ENCODE measurements at regions of chr4 and their contacts with region 1.

Region 1: DNA sequence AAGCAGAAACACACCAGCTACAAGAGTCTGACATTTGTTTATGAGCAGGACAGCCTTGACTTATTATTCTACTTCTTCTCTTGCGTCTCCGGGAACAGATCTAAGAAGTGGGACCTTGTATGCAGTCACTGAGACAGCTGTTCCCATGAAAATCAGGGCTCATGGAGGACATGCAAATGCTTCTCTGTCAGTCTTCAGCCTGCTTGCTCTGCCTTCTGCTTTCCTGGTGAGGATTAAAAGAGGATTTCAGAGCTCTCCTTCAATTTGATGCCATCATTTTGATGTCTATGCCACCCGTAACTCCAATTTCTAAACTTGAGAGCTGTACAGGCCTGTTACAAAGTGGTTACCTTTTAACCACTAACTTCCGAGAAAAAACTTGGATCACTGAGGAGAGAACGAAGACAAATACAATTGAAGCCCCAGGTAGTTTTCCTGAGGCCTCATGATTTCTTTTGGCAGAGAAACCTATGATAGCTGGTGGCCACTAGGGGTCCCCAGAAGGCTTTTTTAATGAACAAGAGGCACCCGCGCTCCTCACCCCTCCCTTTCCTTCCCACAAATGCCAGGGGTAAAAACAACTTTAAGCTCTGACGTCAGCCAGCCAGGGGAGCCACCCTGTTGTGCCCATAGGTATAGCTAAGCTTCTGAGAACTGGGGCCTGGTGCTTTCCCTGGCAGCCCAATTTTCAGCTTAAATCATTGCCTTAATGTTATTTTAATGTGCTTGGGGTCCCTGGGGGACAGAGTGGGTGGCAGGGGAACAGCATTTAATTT is 97.0 kb downstream of the DDIT4L start:
- DNase-seq: peak; percentile 78 to 87
- ATAC-seq: peak; percentile 86 to 94
- H3K4me3 ChIP-seq: no peak overlapping the region
- H3K27ac ChIP-seq: peak overlapping the region; percentile 71 to 78 (median 74)
- H3K4me1 ChIP-seq: peaks cover 26 to 34% of the 10 kb centered on the region in 2 donors
- H3K27me3 ChIP-seq: no peaks in the 10 kb centered on the region
- CTCF ChIP-seq: peak; percentile 77 to 84 (median 82)
- POLR2A ChIP-seq: no peak

Region 2: GRCh38 chr4:99998062-99998867 is 95.0 kb before region 1 on chr4:
- in situ Hi-C with region 1: no loop called
- intact Hi-C with region 1: no loop called
- DNase-seq: no peak
- ATAC-seq: no peak
- H3K4me3 ChIP-seq: no peak overlapping the region
- H3K27ac ChIP-seq: no peak overlapping the region
- H3K4me1 ChIP-seq: no peaks in the 10 kb centered on the region
- H3K27me3 ChIP-seq: no peaks in the 10 kb centered on the region
- CTCF ChIP-seq: peak in 1 of 5 experiments; percentile 21
- POLR2A ChIP-seq: no peak

Region 3: GRCh38 chr4:100248476-100248875 is 155.2 kb after region 1 on chr4:
- in situ Hi-C with region 1: no loop called
- intact Hi-C with region 1: loop called (anchors 5 kb)
- DNase-seq: no peak
- ATAC-seq: peak; percentile 26 to 57
- H3K4me3 ChIP-seq: no peak overlapping the region
- H3K27ac ChIP-seq: peak overlapping the region; percentile 12 to 64 (median 53)
- H3K4me1 ChIP-seq: peaks cover 16 to 30% of the 10 kb centered on the region in 2 donors
- H3K27me3 ChIP-seq: no peaks in the 10 kb centered on the region
- CTCF ChIP-seq: no peak
- POLR2A ChIP-seq: no peak

Region 4: GRCh38 chr4:100414016-100414790 is 320.9 kb after region 1 on chr4:
- in situ Hi-C with region 1: loop called in 2 of 4 experiments (anchors 10 kb)
- intact Hi-C with region 1: loop called (anchors 5 kb)
- DNase-seq: peak; percentile 74 to 85
- ATAC-seq: peak; percentile 98 to 99
- H3K4me3 ChIP-seq: no peak overlapping the region
- H3K27ac ChIP-seq: peak overlapping the region; percentile 52 to 82 (median 78)
- H3K4me1 ChIP-seq: peaks cover 0 to 36% of the 10 kb centered on the region in 2 donors
- H3K27me3 ChIP-seq: no peaks in the 10 kb centered on the region
- CTCF ChIP-seq: peak in 1 of 5 experiments; percentile 38
- POLR2A ChIP-seq: no peak

Region 5: DNA sequence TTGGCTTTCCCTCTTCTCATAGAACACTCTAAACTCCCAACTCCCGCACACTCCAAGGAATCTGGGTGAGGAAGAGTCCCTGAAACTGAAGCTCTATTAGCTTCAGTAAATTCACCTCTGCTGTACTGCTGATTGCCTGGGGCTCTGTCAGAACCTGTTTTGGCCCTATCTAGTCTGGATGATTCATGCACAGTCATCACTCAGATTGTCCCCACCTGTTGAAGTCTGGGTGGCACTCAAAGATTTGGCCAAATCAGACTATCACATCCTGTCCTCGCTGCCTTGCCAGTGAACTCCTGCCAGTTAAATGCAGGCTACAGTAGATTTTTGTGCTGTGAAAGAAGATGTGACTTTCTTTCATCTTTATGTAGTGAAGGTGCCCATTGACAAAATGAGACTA is 488.1 kb after region 1 on chr4:
- in situ Hi-C with region 1: no loop called
- intact Hi-C with region 1: loop called (anchors 10 kb)
- DNase-seq: peak; percentile 78 to 85
- ATAC-seq: peak; percentile 98
- H3K4me3 ChIP-seq: peak overlapping the region in 1 of 4 donors; percentile 12
- H3K27ac ChIP-seq: peak overlapping the region; percentile 68 to 87 (median 76)
- H3K4me1 ChIP-seq: peaks cover 16% of the 10 kb centered on the region in 2 donors
- H3K27me3 ChIP-seq: no peaks in the 10 kb centered on the region
- CTCF ChIP-seq: no peak
- POLR2A ChIP-seq: no peak

Region 6: DNA sequence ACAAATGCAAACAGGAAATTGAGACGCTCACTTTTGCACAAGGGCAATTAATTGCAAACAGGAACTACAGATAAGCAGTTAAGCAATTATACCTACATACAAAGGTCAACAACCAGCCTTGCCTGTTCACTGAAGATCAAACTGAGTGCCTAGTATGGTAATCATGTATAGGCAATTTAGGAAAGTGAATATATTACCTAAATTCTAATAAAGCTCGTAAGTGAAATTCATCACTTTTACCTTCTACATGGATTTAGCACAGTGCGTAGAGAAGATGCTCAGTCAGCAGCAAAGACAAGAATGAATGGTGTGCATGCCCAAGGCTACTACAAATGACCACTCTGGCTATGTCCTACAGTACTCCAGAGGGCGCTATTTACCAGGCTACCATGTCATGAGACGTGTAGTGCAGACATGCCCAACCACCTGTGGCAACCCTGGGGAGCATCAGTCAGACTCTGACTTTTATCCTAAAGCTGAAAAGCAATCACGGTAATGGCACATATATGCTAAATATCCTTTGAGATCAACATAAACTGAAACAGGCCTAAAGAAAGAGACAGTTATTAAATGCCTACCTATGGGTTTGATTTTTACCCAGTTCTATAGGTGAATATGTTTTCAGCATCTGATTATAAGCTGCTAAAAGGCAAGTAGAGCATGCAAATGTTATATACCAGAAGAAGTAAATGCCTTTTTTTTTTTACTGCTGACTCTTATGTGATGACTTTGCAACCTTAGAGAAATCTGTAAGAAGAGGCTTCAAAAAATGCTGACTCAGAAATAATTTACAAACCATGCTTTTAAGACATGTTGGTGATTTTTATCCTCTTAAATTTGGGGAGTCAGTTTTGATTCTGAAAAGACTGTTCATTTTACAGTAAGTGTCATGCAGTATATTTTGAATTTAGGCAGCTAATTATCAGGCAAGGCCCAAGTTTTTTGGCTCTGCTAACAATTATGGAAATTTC is 1076.0 kb after region 1 on chr4:
- in situ Hi-C with region 1: no loop called
- intact Hi-C with region 1: loop called (anchors 10 kb)
- DNase-seq: peak; percentile 28 to 61
- ATAC-seq: peak; percentile 92 to 98
- H3K4me3 ChIP-seq: no peak overlapping the region
- H3K27ac ChIP-seq: no peak overlapping the region
- H3K4me1 ChIP-seq: peaks cover 0 to 17% of the 10 kb centered on the region in 2 donors
- H3K27me3 ChIP-seq: no peaks in the 10 kb centered on the region
- CTCF ChIP-seq: peak; percentile 69 to 83 (median 77)
- POLR2A ChIP-seq: no peak

Region 7: DNA sequence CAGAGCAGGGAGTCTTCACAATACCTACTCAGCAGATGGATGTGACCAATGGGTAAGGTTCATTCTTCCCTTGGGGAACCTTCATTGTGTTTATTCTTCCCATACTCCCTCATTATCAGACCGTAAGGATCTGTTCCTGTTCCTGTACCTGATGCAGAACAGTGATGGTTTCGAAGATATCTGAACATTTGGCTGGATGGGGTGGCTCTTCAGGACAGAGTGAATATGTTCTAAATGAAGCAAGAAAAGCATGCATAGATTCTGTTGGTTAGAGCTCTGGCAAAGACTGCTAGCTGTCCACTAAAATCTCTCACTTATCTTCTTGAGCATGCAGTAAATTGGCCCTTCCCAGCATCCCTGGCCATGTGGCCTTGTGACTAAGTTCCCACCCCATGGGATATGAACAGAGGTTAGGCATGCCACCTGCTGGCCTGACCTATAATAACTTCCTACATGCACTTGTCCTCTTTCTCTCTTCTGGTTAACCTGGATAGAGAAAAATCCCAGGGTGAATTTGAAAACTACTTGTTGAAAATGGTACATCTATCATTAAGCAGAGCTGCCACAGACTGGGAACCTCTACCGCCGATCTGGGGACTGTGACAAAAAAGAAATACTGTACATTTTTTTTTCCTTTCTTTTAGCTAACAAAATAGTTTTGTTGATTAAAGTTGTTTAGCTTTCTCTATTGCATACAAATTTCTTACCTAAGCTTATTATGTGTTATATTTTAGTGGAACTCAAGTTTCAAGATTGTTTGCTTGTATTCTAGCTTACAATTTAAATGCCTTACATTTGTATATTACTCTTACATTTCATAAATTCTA is 1637.2 kb after region 1 on chr4:
- in situ Hi-C with region 1: no loop called
- intact Hi-C with region 1: loop called (anchors 1 kb)
- DNase-seq: peak; percentile 24 to 58
- ATAC-seq: peak; percentile 52 to 90
- H3K4me3 ChIP-seq: no peak overlapping the region
- H3K27ac ChIP-seq: no peak overlapping the region
- H3K4me1 ChIP-seq: no peaks in the 10 kb centered on the region
- H3K27me3 ChIP-seq: no peaks in the 10 kb centered on the region
- CTCF ChIP-seq: peak; percentile 38 to 67 (median 63)
- POLR2A ChIP-seq: no peak